Panc1 (cell line): ENCODE measurements at regions of chr5 and their contacts with region 1.

Region 1: GRCh38 chr5:124748687-124749594 is 2.5 kb upstream of the ZNF608 start:
- DNase-seq: peak; percentile 95
- ATAC-seq: peak; percentile 89
- H3K4me3 ChIP-seq: peak overlapping the region; percentile 79 to 82
- H3K27ac ChIP-seq: peak overlapping the region; percentile 100
- H3K4me1 ChIP-seq: peaks cover 32% of the 10 kb centered on the region
- H3K27me3 ChIP-seq: no peaks in the 10 kb centered on the region
- CTCF ChIP-seq: no peak

Region 2: GRCh38 chr5:124724357-124725039 is 24.4 kb before region 1 on chr5:
- CTCF ChIA-PET with region 1: interaction called, 26 read pairs
- POLR2A ChIA-PET with region 1: interaction called, 4 read pairs
- in situ Hi-C with region 1: no loop called
- intact Hi-C with region 1: no loop called
- DNase-seq: no peak
- ATAC-seq: peak; percentile 17; the same call in 1 of the 2 replicates
- H3K4me3 ChIP-seq: peak overlapping the region; percentile 0 to 26; a peak in 3 of 4 replicates
- H3K27ac ChIP-seq: peak overlapping the region; percentile 76
- H3K4me1 ChIP-seq: peaks cover 83% of the 10 kb centered on the region
- H3K27me3 ChIP-seq: no peaks in the 10 kb centered on the region
- CTCF ChIP-seq: no peak

Region 3: GRCh38 chr5:124935065-124935464 is 186.1 kb after region 1 on chr5:
- CTCF ChIA-PET with region 1: no interaction called
- POLR2A ChIA-PET with region 1: interaction called, 20 read pairs
- in situ Hi-C with region 1: no loop called
- intact Hi-C with region 1: no loop called
- DNase-seq: no peak
- ATAC-seq: no peak
- H3K4me3 ChIP-seq: no peak overlapping the region
- H3K27ac ChIP-seq: no peak overlapping the region
- H3K4me1 ChIP-seq: no peaks in the 10 kb centered on the region
- H3K27me3 ChIP-seq: no peaks in the 10 kb centered on the region
- CTCF ChIP-seq: no peak

Region 4: GRCh38 chr5:124952079-124952478 is 203.1 kb after region 1 on chr5:
- CTCF ChIA-PET with region 1: no interaction called
- POLR2A ChIA-PET with region 1: no interaction called
- in situ Hi-C with region 1: no loop called
- intact Hi-C with region 1: no loop called
- DNase-seq: no peak
- ATAC-seq: peak; percentile 38; the same call in 1 of the 2 replicates
- H3K4me3 ChIP-seq: no peak overlapping the region
- H3K27ac ChIP-seq: peak overlapping the region; percentile 59; the same call in 1 of the 2 replicates
- H3K4me1 ChIP-seq: no peaks in the 10 kb centered on the region; the same call in 1 of the 2 replicates
- H3K27me3 ChIP-seq: no peaks in the 10 kb centered on the region
- CTCF ChIP-seq: no peak

Region 5: DNA sequence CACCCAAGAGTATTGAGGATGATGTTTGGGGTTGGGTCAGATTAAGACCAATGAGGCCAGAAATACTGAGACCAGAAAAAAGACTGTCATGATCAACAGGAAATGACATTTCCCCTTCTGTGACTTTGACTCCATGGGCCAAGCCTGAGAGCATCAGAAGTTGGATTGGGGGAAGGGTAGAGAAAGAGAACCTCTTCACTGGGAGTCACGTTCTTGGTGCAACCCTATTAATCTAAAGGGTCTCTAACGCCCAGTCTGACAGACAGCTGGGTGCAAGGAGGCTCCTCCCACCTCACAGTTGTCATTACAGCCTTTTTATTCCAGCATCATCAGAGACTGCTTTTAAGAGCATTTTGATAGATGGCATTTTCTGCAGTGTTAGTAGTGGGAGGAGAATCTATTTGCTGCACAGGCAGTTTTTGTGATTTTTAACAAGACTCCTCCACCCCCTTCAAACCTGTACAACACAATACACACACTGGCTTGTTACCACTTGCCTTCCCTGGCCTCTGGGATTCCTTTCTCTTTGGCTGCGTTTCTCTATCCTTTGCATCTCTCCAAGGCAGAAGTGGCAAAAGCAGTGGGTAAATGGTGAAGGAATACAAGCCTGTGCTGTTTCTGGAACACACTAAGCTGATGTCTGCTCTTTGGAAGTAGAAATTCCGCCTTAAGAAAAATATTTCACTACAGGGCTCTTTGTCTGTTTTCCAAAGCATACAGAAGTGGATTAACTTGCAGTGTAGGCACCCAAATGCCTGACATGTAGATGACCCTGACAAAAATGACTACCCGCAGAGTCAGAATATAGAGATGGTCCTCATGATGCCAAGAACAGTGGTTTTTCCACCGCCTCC is 307.9 kb after region 1 on chr5:
- CTCF ChIA-PET with region 1: no interaction called
- POLR2A ChIA-PET with region 1: interaction called, 12 read pairs
- in situ Hi-C with region 1: no loop called
- intact Hi-C with region 1: no loop called
- DNase-seq: no peak
- ATAC-seq: no peak
- H3K4me3 ChIP-seq: no peak overlapping the region
- H3K27ac ChIP-seq: no peak overlapping the region
- H3K4me1 ChIP-seq: no peaks in the 10 kb centered on the region
- H3K27me3 ChIP-seq: no peaks in the 10 kb centered on the region
- CTCF ChIP-seq: no peak

Region 6: GRCh38 chr5:125298260-125298659 is 549.3 kb after region 1 on chr5:
- CTCF ChIA-PET with region 1: no interaction called
- POLR2A ChIA-PET with region 1: interaction called, 14 read pairs
- in situ Hi-C with region 1: no loop called
- intact Hi-C with region 1: no loop called
- DNase-seq: no peak
- ATAC-seq: no peak
- H3K4me3 ChIP-seq: no peak overlapping the region
- H3K27ac ChIP-seq: peak overlapping the region; percentile 67
- H3K4me1 ChIP-seq: peaks cover 9% of the 10 kb centered on the region
- H3K27me3 ChIP-seq: no peaks in the 10 kb centered on the region
- CTCF ChIP-seq: no peak

Region 7: DNA sequence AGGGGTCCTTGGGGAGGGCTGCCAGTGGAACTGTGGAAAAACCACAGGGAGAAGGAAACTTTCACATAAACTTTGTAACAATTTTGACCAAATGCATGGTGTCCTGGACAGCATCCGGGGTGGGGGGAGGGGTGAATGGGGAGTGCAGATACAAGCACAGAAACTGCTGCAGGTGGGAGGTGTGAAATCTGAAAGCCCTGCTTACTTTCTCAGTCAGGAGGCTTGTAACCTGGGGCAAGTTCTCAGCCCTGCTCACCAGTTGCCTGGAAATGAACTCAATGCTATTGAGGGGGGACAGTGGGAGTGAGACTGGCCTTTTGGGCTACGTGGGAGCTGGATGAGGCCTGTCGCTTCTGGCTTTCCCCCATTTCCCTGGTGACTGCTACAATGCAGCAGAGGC is 692.0 kb after region 1 on chr5:
- CTCF ChIA-PET with region 1: no interaction called
- POLR2A ChIA-PET with region 1: no interaction called
- in situ Hi-C with region 1: no loop called
- intact Hi-C with region 1: no loop called
- DNase-seq: no peak
- ATAC-seq: no peak
- H3K4me3 ChIP-seq: no peak overlapping the region
- H3K27ac ChIP-seq: peak overlapping the region; percentile 29; the same call in 1 of the 2 replicates
- H3K4me1 ChIP-seq: no peaks in the 10 kb centered on the region
- H3K27me3 ChIP-seq: no peaks in the 10 kb centered on the region
- CTCF ChIP-seq: no peak

Region 8: GRCh38 chr5:125484742-125485641 is 736.1 kb after region 1 on chr5:
- CTCF ChIA-PET with region 1: interaction called, 3 read pairs
- POLR2A ChIA-PET with region 1: no interaction called
- in situ Hi-C with region 1: no loop called
- intact Hi-C with region 1: loop called (anchors 10 kb)
- DNase-seq: peak; percentile 90
- ATAC-seq: peak; percentile 96
- H3K4me3 ChIP-seq: peak overlapping the region; percentile 18 to 41; a peak in 3 of 4 replicates
- H3K27ac ChIP-seq: peak overlapping the region; percentile 100
- H3K4me1 ChIP-seq: peaks cover 39% of the 10 kb centered on the region
- H3K27me3 ChIP-seq: no peaks in the 10 kb centered on the region
- CTCF ChIP-seq: no peak